Activated CD8-positive, alpha-beta T cell treated with anti-CD3 and anti-CD28 coated beads, Interleukin-2, amount 10 ng/mL, durations not matched to agents 7 days and 5 days (primary cell): ENCODE measurements at regions of chr3 and their contacts with region 1.

Region 1: GRCh38 chr3:141243271-141243707 is 11.7 kb downstream of the PXYLP1 start:
- DNase-seq: peak; percentile 84
- ATAC-seq: peak; percentile 98
- H3K4me3 Mint-ChIP-seq: peak overlapping the region; percentile 54
- H3K27ac Mint-ChIP-seq: peak overlapping the region; percentile 78
- H3K4me1 Mint-ChIP-seq: peaks cover 51% of the 10 kb centered on the region
- H3K27me3 Mint-ChIP-seq: no peaks in the 10 kb centered on the region

Region 2: DNA sequence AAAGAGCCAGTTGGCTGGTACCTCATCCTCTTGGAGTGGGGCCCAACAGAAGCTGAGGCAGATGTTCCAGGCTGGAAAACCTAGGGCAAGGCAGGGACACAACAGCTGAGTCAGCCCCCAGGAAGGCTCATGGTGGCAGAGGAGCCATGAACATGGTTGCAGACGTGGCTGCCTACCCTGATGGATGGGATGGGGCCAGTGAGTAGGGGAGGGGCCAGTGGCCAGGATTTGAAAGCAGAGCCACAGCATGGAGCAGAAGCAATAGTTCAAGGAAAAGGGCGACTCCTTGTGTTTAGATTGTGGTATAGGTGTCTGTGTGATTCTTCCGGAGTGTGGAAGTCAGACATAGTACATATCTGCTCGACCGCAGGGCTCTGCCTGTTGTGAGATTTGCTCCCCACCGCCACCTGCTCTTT is 12.6 kb after region 1 on chr3:
- CTCF ChIA-PET with region 1: interaction called, 337 read pairs
- POLR2A ChIA-PET with region 1: interaction called, 4 read pairs
- DNase-seq: peak; percentile 66
- ATAC-seq: peak; percentile 98
- H3K4me3 Mint-ChIP-seq: no peak overlapping the region
- H3K27ac Mint-ChIP-seq: peak overlapping the region; percentile 66
- H3K4me1 Mint-ChIP-seq: peaks cover 25% of the 10 kb centered on the region
- H3K27me3 Mint-ChIP-seq: no peaks in the 10 kb centered on the region

Region 3: GRCh38 chr3:141353652-141354495 is 110.6 kb after region 1 on chr3:
- CTCF ChIA-PET with region 1: no interaction called
- POLR2A ChIA-PET with region 1: no interaction called
- DNase-seq: no peak
- ATAC-seq: no peak
- H3K4me3 Mint-ChIP-seq: no peak overlapping the region
- H3K27ac Mint-ChIP-seq: no peak overlapping the region
- H3K4me1 Mint-ChIP-seq: no peaks in the 10 kb centered on the region
- H3K27me3 Mint-ChIP-seq: peaks cover 17% of the 10 kb centered on the region